Kidney (tissue), 22 donors: ENCODE measurements at regions of chr4 and their contacts with region 1.

Region 1: GRCh38 chr4:149719806-149720205 is 95.8 kb downstream of the IQCM start:
- DNase-seq: peak in 2 of 5 donors; percentile 10 to 44
- H3K4me3 ChIP-seq: no peak overlapping the region
- H3K27ac ChIP-seq: no peak overlapping the region
- H3K4me1 ChIP-seq: no peaks in the 10 kb centered on the region
- H3K27me3 ChIP-seq: no peaks in the 10 kb centered on the region
- CTCF ChIP-seq: no peak

Region 2: GRCh38 chr4:149161247-149161646 is 558.6 kb before region 1 on chr4:
- intact Hi-C with region 1: no loop called
- DNase-seq: no peak
- H3K4me3 ChIP-seq: no peak overlapping the region
- H3K27ac ChIP-seq: no peak overlapping the region
- H3K4me1 ChIP-seq: no peaks in the 10 kb centered on the region
- H3K27me3 ChIP-seq: no peaks in the 10 kb centered on the region
- CTCF ChIP-seq: no peak

Region 3: DNA sequence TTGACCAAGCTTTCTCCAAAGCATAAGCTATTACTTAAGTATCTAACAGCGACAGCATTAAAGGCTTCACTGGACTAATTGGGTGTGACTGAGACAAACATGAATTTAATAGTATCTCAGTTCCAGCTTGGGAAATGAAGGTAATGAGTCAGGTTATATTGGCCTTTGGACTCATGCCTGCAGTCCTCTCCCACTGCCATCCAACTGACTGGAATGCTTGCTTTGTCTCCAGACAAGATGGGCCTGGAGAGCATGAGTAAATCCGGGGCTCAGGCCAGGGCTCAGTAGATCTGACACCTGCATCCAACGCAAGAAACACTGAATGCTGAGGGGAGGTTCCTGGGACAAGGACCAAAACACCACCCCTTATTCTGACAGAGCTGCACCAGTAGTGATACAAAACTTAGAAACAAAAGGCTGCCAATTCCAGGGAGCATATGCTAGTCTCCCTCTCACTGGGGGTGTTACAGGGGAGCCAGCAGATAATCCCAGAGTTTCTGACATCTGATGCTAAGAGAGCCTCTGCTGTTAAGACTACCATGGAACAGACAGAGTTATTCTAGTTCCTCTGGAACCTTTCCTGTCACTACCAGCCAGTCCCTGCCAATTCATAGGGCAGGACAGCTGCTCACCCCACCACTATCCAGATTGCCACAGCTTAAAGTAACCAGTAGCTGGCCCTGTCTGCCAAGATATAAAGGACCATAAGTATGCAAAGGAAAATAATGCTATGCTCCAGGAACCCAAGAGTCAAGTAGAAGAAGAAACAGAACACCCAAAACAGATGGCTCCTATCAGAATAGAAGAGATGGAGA is 198.0 kb before region 1 on chr4:
- intact Hi-C with region 1: no loop called
- DNase-seq: peak in 1 of 5 donors; percentile 1
- H3K4me3 ChIP-seq: no peak overlapping the region
- H3K27ac ChIP-seq: no peak overlapping the region
- H3K4me1 ChIP-seq: no peaks in the 10 kb centered on the region
- H3K27me3 ChIP-seq: no peaks in the 10 kb centered on the region
- CTCF ChIP-seq: no peak

Region 4: DNA sequence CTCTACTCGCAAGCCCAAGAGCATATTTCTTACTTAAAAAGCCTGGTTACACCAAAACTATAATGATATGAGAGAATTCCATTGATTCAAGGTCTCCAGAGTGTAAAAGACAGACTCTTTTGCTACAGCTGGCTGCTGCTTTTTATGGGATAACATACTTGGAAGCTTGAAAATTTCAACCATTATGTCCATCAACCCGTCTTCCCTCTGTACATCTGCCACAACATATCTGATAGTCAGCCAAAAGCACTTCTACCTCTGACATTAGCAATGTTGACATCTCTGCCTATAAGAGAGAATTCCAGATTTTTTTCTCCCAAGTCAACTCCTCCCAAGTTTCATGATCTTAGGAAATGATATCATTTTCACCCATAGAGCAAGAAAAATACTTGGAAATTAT is 150.2 kb after region 1 on chr4:
- intact Hi-C with region 1: loop called (anchors 5 kb)
- DNase-seq: no peak
- H3K4me3 ChIP-seq: no peak overlapping the region
- H3K27ac ChIP-seq: no peak overlapping the region
- H3K4me1 ChIP-seq: no peaks in the 10 kb centered on the region
- H3K27me3 ChIP-seq: no peaks in the 10 kb centered on the region
- CTCF ChIP-seq: no peak